ENCODE measurements at regions of chr10 and their contacts with region 1.

Region 1: GRCh38 chr10:109883859-109884771 is 39.2 kb downstream of the XPNPEP1 start:
- DNase-seq: peak; percentile 38 to 68 (median 50)
- H3K4me3 ChIP-seq: no peak overlapping the region
- H3K4me3 Mint-ChIP-seq: no peak overlapping the region
- H3K27ac ChIP-seq: no peak overlapping the region
- H3K27ac Mint-ChIP-seq: peak overlapping the region in 5 of 8 donors; percentile 3 to 63 (median 26)
- H3K4me1 ChIP-seq: no peaks in the 10 kb centered on the region
- H3K4me1 Mint-ChIP-seq: peaks cover 7 to 14% (median 13%) of the 10 kb centered on the region in 3 donors
- H3K27me3 ChIP-seq: no peaks in the 10 kb centered on the region
- H3K27me3 Mint-ChIP-seq: no peaks in the 10 kb centered on the region

Region 2: GRCh38 chr10:109866995-109867635 is 17.0 kb before region 1 on chr10:
- CTCF ChIA-PET with region 1: interaction called, 10 read pairs
- POLR2A ChIA-PET with region 1: no interaction called
- DNase-seq: no peak
- H3K4me3 ChIP-seq: no peak overlapping the region
- H3K4me3 Mint-ChIP-seq: no peak overlapping the region
- H3K27ac ChIP-seq: no peak overlapping the region
- H3K27ac Mint-ChIP-seq: no peak overlapping the region
- H3K4me1 ChIP-seq: no peaks in the 10 kb centered on the region
- H3K4me1 Mint-ChIP-seq: no peaks in the 10 kb centered on the region
- H3K27me3 ChIP-seq: no peaks in the 10 kb centered on the region
- H3K27me3 Mint-ChIP-seq: peaks cover 0 to 2% of the 10 kb centered on the region in 2 donors

Region 3: GRCh38 chr10:109894516-109894915 is 10.4 kb after region 1 on chr10:
- CTCF ChIA-PET with region 1: interaction called, 16 read pairs
- POLR2A ChIA-PET with region 1: no interaction called
- DNase-seq: no peak
- H3K4me3 ChIP-seq: no peak overlapping the region
- H3K4me3 Mint-ChIP-seq: no peak overlapping the region
- H3K27ac ChIP-seq: no peak overlapping the region
- H3K27ac Mint-ChIP-seq: peak overlapping the region in 1 of 8 donors; percentile 55
- H3K4me1 ChIP-seq: no peaks in the 10 kb centered on the region
- H3K4me1 Mint-ChIP-seq: peaks cover 61 to 87% (median 76%) of the 10 kb centered on the region in 3 donors
- H3K27me3 ChIP-seq: no peaks in the 10 kb centered on the region
- H3K27me3 Mint-ChIP-seq: no peaks in the 10 kb centered on the region

Region 4: DNA sequence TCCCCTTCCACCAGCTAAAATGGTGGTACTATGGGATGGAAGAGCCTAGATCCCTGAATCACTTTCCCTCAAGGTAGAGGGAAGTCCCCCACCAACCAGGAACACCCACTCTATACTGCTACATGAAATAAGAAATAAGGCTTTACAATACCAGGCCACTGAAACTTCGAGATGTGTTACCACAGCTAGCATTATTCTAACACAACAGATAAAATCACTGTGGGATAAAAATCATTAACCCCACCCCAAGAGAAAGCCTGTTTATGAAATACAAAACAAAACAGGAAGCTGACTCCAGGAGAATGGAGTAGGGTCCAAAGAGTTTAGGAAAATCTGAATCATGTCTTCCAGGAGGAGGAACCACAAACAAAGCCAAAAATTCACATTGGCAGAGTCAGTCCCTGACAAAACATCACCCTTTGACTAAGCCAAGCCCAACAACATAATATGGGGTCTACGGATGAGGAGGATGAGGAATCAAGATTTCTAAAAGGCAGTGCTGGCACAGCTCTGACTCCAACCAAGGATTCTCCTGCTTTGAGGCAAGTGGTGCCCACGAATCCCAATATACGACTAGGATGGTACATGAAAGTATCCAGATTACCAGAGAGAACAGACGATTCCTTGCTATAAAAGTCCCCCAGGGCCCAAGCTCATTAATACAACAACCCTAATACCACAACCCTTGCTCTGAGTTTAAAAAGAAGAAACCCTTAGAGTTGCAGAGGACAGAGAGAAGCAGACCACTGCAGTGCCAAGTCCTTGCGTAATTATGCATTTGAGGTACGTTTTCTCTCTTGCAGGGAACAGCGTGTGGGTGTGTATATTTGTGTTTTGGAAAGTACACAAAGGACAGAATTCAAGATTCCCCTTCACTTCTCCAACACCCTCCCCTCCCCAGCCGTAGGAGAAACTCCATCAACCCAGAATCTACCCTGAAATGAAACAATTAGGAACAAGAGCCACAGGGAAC is 15.5 kb after region 1 on chr10:
- CTCF ChIA-PET with region 1: interaction called, 16 read pairs
- POLR2A ChIA-PET with region 1: no interaction called
- DNase-seq: no peak
- H3K4me3 ChIP-seq: no peak overlapping the region
- H3K4me3 Mint-ChIP-seq: no peak overlapping the region
- H3K27ac ChIP-seq: no peak overlapping the region
- H3K27ac Mint-ChIP-seq: peak overlapping the region in 3 of 8 donors; percentile 17 to 58 (median 24)
- H3K4me1 ChIP-seq: peaks cover 25% of the 10 kb centered on the region
- H3K4me1 Mint-ChIP-seq: peaks cover 67 to 90% (median 84%) of the 10 kb centered on the region in 3 donors
- H3K27me3 ChIP-seq: no peaks in the 10 kb centered on the region
- H3K27me3 Mint-ChIP-seq: no peaks in the 10 kb centered on the region

Region 5: GRCh38 chr10:109914966-109915365 is 30.9 kb after region 1 on chr10:
- CTCF ChIA-PET with region 1: interaction called, 19 read pairs
- POLR2A ChIA-PET with region 1: no interaction called
- DNase-seq: peak in 4 of 5 donors; percentile 29 to 64 (median 58)
- H3K4me3 ChIP-seq: peak overlapping the region; percentile 6
- H3K4me3 Mint-ChIP-seq: peak overlapping the region; percentile 0 to 80 (median 63)
- H3K27ac ChIP-seq: peak overlapping the region; percentile 21
- H3K27ac Mint-ChIP-seq: peak overlapping the region; percentile 59 to 94 (median 82)
- H3K4me1 ChIP-seq: peaks cover 81% of the 10 kb centered on the region
- H3K4me1 Mint-ChIP-seq: peaks cover 85 to 92% (median 89%) of the 10 kb centered on the region in 3 donors
- H3K27me3 ChIP-seq: no peaks in the 10 kb centered on the region
- H3K27me3 Mint-ChIP-seq: no peaks in the 10 kb centered on the region

Region 6: GRCh38 chr10:109978481-109978880 is 94.4 kb after region 1 on chr10:
- CTCF ChIA-PET with region 1: interaction called, 22 read pairs
- POLR2A ChIA-PET with region 1: no interaction called
- DNase-seq: peak; percentile 40 to 71 (median 49)
- H3K4me3 ChIP-seq: no peak overlapping the region
- H3K4me3 Mint-ChIP-seq: no peak overlapping the region
- H3K27ac ChIP-seq: no peak overlapping the region
- H3K27ac Mint-ChIP-seq: no peak overlapping the region
- H3K4me1 ChIP-seq: peaks cover 8% of the 10 kb centered on the region
- H3K4me1 Mint-ChIP-seq: no peaks in the 10 kb centered on the region
- H3K27me3 ChIP-seq: no peaks in the 10 kb centered on the region
- H3K27me3 Mint-ChIP-seq: no peaks in the 10 kb centered on the region

Region 7: GRCh38 chr10:110007701-110008517 is 123.8 kb after region 1 on chr10 and contains the start of gene ADD3:
- CTCF ChIA-PET with region 1: interaction called, 12 read pairs
- POLR2A ChIA-PET with region 1: interaction called, 4 read pairs
- DNase-seq: peak; percentile 92 to 98 (median 95)
- H3K4me3 ChIP-seq: peak within 1 kb of the TSS; percentile 91
- H3K4me3 Mint-ChIP-seq: no peak within 1 kb of the TSS
- H3K27ac ChIP-seq: peak within 1 kb of the TSS; percentile 75
- H3K27ac Mint-ChIP-seq: peak within 1 kb of the TSS in 6 of 8 donors; percentile 86 to 99 (median 93)
- H3K4me1 ChIP-seq: peaks cover 31% of the 10 kb centered on the region
- H3K4me1 Mint-ChIP-seq: peaks cover 41 to 42% (median 42%) of the 10 kb centered on the region in 3 donors
- H3K27me3 ChIP-seq: no peaks in the 10 kb centered on the region
- H3K27me3 Mint-ChIP-seq: no peaks in the 10 kb centered on the region
- total RNA-seq, gene ADD3: 39.4 to 50.3 TPM

Measured in CD8-positive, alpha-beta memory T cell (primary cell).